Mammary epithelial cell (primary cell): ENCODE measurements at regions of chr6 and their contacts with region 1.

Region 1: GRCh38 chr6:16964553-16965501 is 137.0 kb upstream of the STMND1 start:
- DNase-seq: peak; percentile 45
- H3K4me3 ChIP-seq: no peak overlapping the region
- H3K27ac ChIP-seq: no peak overlapping the region
- H3K4me1 ChIP-seq: no peaks in the 10 kb centered on the region
- H3K27me3 ChIP-seq: peaks cover 2% of the 10 kb centered on the region
- CTCF ChIP-seq: peak; percentile 96 to 97

Region 2: DNA sequence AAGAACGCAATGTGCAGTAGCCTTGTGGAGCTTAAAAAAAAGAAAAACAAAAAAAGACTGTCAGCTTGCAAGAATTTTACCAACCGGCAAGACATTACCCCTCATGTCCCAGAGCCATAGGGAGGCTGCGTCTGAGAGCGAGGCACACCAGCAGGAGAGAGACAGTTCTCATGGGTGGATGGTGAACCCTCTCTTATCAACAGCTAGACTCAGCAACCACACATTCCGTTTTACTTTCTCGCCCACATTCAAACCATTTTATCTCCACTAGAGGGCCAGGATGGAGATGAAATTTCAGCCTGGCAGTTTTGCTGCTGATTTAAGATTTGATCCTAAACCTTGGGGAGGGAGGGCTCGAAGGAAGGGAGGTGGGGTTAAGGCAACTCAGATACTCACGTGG is 450.6 kb before region 1 on chr6:
- CTCF ChIA-PET with region 1: no interaction called
- dilution Hi-C with region 1: no loop called
- in situ Hi-C with region 1: no loop called
- intact Hi-C with region 1: loop called (anchors 2 kb)
- DNase-seq: peak; percentile 18
- H3K4me3 ChIP-seq: no peak overlapping the region
- H3K27ac ChIP-seq: no peak overlapping the region
- H3K4me1 ChIP-seq: peaks cover 7% of the 10 kb centered on the region
- H3K27me3 ChIP-seq: no peaks in the 10 kb centered on the region
- CTCF ChIP-seq: peak; percentile 44 to 58

Region 3: GRCh38 chr6:16741112-16742016 is 223.5 kb before region 1 on chr6:
- CTCF ChIA-PET with region 1: no interaction called
- dilution Hi-C with region 1: no loop called
- in situ Hi-C with region 1: no loop called
- intact Hi-C with region 1: loop called (anchors 1 kb)
- DNase-seq: peak; percentile 94
- H3K4me3 ChIP-seq: no peak overlapping the region
- H3K27ac ChIP-seq: peak overlapping the region; percentile 55
- H3K4me1 ChIP-seq: peaks cover 53% of the 10 kb centered on the region
- H3K27me3 ChIP-seq: no peaks in the 10 kb centered on the region
- CTCF ChIP-seq: no peak

Region 4: DNA sequence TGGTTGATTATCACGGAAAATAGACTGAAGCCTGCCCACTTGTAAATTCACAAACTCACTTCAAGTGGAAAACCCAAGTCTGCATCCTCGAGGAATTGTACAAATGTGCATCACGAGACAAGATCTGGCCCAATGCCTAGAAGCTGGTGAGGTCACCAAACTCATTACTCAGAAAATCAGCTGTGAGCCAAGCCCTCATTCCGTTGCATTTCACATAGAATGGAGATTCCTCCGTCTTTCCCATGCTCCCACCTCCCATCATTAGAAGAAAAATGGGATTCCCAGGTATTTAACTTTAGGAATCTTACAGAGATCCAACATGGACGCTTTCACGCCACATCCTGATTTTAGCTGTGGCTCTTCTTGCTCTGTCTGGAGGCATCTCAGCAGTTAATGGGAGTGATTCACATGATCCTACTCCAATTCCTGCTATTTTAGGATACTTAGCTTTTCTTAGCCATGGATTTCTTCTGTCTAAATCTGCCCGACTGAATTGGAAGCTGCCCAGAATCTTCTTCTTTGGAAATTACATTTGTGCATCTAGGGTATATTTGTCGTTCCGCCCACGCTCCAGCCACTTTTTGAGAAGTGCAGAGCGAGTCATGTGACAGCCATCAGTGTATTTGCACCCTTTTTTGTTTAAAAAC is 68.3 kb after region 1 on chr6:
- CTCF ChIA-PET with region 1: no interaction called
- dilution Hi-C with region 1: loop called (anchors 5 kb)
- in situ Hi-C with region 1: no loop called
- intact Hi-C with region 1: no loop called
- DNase-seq: peak; percentile 89
- H3K4me3 ChIP-seq: peak overlapping the region in 1 of 3 experiments; percentile 12
- H3K27ac ChIP-seq: peak overlapping the region; percentile 78
- H3K4me1 ChIP-seq: peaks cover 20% of the 10 kb centered on the region
- H3K27me3 ChIP-seq: no peaks in the 10 kb centered on the region
- CTCF ChIP-seq: no peak